T-cell (primary cell): ENCODE measurements at regions of chr3 and their contacts with region 1.

Region 1: DNA sequence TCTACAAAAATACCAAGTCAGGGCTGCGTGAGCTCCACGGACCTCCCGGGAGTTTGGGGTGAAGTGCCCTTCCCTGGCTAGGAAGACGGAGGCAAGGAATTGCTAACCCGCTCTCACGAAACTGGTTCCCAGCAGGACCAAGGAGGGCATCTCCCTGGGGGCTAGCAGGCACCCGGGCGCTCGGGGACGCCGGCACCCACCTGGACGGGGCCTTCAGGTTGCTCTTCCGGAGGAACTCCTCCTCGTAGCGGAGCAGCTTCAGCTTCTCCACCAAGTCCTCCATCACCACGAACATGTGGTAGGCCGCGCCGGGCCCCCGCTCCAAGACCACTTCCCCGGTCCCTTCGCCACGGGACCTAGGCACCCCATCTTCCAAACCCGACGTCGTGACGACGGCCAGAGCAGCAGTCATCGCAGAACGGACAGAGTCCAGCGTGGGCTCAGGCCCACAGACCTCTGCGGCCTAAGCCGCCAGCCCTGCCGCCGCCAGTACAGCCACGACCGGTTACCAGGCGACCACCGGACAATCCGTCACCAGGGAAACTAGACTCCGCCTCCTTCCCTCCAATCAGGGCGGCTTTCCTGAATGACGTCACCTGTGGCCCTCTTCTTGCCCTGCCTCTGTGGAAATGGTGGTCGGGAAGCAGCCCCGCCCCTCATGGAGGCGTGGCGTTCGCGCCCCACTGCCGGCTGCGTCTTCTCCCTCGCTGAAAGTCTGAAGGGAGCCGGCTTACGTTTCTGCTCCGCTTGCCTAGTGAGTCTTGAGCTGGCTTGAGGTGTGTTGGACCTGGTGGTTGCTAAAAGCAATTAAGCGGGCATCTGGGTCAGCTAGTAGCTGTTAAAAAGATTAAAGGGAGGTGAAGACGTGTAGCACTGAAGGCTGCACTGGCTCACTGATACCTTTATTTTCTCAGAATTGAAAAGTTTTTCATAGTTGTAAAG is at the start of gene IFT57:
- DNase-seq: peak; percentile 90 to 99 (median 94)
- ATAC-seq: peak; percentile 94 to 96 (median 94)
- H3K4me3 ChIP-seq: peak within 1 kb of the TSS; percentile 91 to 94
- H3K4me3 Mint-ChIP-seq: peak within 1 kb of the TSS; percentile 92 to 98 (median 93)
- H3K27ac ChIP-seq: peak within 1 kb of the TSS; percentile 96
- H3K27ac Mint-ChIP-seq: peak within 1 kb of the TSS; percentile 99 to 100
- H3K4me1 ChIP-seq: peaks cover 18 to 35% of the 10 kb centered on the region in 2 experiments
- H3K4me1 Mint-ChIP-seq: peaks cover 53 to 68% (median 64%) of the 10 kb centered on the region in 3 donors
- H3K27me3 ChIP-seq: no peaks in the 10 kb centered on the region
- H3K27me3 Mint-ChIP-seq: no peaks in the 10 kb centered on the region
- total RNA-seq, gene IFT57: 24.8 to 36.7 (median 30.0) TPM

Region 2: DNA sequence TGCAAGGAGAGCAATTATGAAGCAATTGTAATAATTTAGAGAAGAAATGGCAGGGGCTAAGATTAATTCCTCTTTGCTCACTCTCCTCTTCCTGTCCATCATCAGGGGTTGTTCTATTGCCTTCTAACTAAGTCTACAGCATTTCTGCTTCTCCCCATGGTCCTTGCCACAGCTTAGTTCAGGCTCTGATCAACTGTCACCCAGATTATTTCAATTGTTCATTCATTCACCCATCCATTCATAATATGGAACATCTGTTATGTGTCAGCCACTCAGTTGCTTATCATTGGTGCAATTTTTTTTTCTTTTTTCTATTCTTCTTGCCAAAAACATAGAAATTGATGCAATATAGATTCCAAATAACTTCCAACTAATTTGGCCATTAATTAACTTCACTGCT is 224.5 kb before region 1 on chr3:
- CTCF ChIA-PET with region 1: interaction called in 1 of 2 experiments, 11 read pairs
- POLR2A ChIA-PET with region 1: no interaction called
- DNase-seq: no peak
- ATAC-seq: no peak
- H3K4me3 ChIP-seq: no peak overlapping the region
- H3K4me3 Mint-ChIP-seq: no peak overlapping the region
- H3K27ac ChIP-seq: no peak overlapping the region
- H3K27ac Mint-ChIP-seq: no peak overlapping the region
- H3K4me1 ChIP-seq: no peaks in the 10 kb centered on the region
- H3K4me1 Mint-ChIP-seq: peaks cover 0 to 4% (median 2%) of the 10 kb centered on the region in 3 donors
- H3K27me3 ChIP-seq: peaks cover 0 to 4% of the 10 kb centered on the region in 2 experiments
- H3K27me3 Mint-ChIP-seq: no peaks in the 10 kb centered on the region

Region 3: GRCh38 chr3:108117241-108117775 is 104.9 kb before region 1 on chr3:
- CTCF ChIA-PET with region 1: interaction called in 1 of 2 experiments, 3 read pairs
- POLR2A ChIA-PET with region 1: interaction called in 1 of 2 experiments, 12 read pairs
- DNase-seq: no peak
- ATAC-seq: no peak
- H3K4me3 ChIP-seq: no peak overlapping the region
- H3K4me3 Mint-ChIP-seq: no peak overlapping the region
- H3K27ac ChIP-seq: no peak overlapping the region
- H3K27ac Mint-ChIP-seq: no peak overlapping the region
- H3K4me1 ChIP-seq: peaks cover 0 to 6% of the 10 kb centered on the region in 2 experiments
- H3K4me1 Mint-ChIP-seq: peaks cover 12 to 34% (median 21%) of the 10 kb centered on the region in 3 donors
- H3K27me3 ChIP-seq: no peaks in the 10 kb centered on the region
- H3K27me3 Mint-ChIP-seq: no peaks in the 10 kb centered on the region